Astrocyte of the cerebellum (primary cell): ENCODE measurements at regions of chr1 and their contacts with region 1.

Region 1: DNA sequence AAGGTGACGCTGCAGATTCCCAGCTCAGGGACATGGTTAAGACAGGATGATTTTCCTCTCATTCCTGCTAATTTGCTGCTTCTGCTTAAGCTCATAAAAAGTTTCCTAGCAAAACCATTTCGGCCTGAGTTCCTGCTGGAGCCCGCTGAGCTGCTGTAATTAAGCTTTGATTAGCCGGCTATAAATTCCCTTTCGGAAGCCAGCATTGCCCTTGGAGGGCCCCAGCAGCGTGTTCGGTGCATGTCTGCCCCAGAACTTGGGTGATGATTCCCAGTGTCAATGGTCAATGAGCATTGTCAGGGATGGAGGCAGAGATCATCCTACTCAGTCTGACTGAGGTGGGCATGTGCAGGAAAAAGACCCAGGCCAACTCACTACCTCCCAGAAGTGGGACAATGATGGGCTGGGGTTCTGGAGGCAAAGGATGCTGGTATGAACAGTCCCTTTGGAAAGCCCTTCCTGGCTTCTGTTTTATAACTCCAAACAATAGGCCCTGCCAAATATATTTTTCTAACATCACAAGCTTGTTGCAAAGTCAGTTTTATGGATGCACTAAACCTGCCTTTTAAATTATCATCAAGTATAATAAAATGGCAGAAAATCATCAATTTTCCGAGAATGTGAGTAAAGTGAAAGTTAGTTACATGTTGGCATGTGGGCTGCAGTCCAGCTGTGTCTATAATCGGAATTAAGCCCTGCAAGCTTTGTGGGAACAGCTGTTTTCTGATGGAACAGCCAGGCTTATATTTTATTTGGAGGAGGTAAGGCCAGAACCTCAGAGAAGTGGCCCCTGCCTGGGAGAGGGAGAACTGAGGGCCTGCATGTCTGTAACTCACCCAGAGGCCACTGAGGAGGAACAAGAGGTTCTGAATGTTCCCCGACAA is 257.1 kb downstream of the GRIK3 start:
- DNase-seq: no peak
- H3K4me3 ChIP-seq: no peak overlapping the region
- CTCF ChIP-seq: no peak

Region 2: DNA sequence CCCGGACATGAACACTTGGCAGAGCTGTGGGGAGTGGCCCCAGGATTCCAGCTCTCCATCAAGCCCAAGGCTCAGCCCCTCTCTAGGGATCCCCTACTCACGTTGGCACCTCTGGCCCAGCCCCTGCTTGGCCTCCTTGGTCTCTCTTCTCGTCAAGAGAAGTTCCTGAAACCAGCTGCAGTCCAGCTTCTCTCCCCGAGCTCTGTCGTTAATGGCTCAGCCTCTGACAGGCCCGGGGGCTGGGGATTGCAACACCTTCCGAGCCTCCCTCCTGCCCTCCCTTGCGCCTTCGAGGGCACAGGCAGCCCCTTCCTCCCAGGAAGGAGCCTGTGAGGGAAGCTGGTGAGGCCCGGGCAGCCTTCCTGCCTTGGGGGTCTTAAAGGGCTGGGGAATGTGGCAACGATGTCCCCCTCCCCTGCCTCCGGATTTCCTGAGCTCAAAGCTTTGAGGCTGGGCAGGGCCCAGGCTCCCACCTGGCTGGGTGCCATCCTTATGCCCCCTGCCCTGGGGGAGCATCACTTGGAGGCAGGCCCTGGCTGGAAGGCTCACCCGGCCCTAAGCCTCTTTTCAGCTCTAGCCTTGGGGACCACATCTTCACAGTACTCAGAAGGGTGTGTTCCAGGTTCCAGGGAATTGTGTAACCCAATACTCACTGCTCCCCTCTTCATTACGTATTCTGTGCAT is 294.3 kb before region 1 on chr1 and contains the start of gene CSF3R:
- in situ Hi-C with region 1: no loop called
- DNase-seq: no peak
- H3K4me3 ChIP-seq: no peak within 1 kb of the TSS
- CTCF ChIP-seq: no peak

Region 3: GRCh38 chr1:36856131-36856530 is 78.9 kb after region 1 on chr1:
- in situ Hi-C with region 1: loop called (anchors 5 kb)
- DNase-seq: no peak
- H3K4me3 ChIP-seq: no peak overlapping the region
- CTCF ChIP-seq: no peak